Heart left ventricle (tissue), 16 donors: ENCODE measurements at regions of chr12 and their contacts with region 1.

Region 1: DNA sequence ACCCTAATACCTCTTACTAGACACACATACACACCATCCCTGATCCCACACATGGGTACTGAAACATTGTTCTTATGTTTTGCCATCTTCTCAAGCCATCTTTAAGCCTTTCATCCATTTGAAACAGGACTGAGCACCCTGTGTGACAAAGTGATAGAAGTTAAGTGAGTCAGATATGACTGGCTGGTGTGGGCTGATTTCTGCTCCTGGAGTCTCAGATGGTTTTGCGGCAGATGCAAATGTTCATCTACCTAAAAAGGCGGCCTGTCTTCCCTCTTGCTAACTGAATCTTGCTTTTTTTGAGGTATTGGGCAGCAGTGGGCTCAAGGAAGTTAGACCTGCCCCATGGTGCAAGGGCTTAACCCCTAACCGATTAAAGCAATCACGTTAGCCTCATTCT is 30.4 kb upstream of the PKP2 start:
- DNase-seq: no peak
- ATAC-seq: no peak
- H3K4me3 ChIP-seq: no peak overlapping the region
- H3K27ac ChIP-seq: no peak overlapping the region
- H3K4me1 ChIP-seq: no peaks in the 10 kb centered on the region
- H3K27me3 ChIP-seq: no peaks in the 10 kb centered on the region
- CTCF ChIP-seq: no peak
- POLR2A ChIP-seq: no peak

Region 2: DNA sequence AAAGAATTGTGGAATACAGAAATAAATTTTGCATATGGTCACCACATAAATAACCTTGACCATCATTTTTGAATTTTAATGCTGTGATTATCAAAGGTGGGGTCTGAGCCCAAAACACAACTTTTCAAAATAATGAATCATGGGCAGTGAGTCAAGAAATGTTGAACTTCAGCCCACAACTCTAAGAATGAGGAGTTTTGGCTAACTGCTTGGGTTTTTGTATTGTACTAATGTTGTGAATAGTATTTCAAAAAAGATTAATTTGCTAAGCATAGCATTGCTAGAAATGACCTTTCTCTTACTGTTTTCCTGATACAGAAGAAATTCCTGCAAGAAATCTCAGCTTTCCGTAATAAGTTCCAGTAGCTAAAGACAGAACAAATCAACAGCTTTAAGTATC is 146.9 kb before region 1 on chr12:
- intact Hi-C with region 1: loop called in 1 of 10 experiments (anchors 5 kb)
- DNase-seq: no peak
- ATAC-seq: no peak
- H3K4me3 ChIP-seq: no peak overlapping the region
- H3K27ac ChIP-seq: no peak overlapping the region
- H3K4me1 ChIP-seq: no peaks in the 10 kb centered on the region
- H3K27me3 ChIP-seq: no peaks in the 10 kb centered on the region
- CTCF ChIP-seq: no peak
- POLR2A ChIP-seq: no peak

Region 3: GRCh38 chr12:32885831-32886230 is 41.1 kb before region 1 on chr12:
- intact Hi-C with region 1: no loop called
- DNase-seq: no peak
- ATAC-seq: no peak
- H3K4me3 ChIP-seq: peak overlapping the region in 1 of 12 donors; percentile 7
- H3K27ac ChIP-seq: peak overlapping the region in 9 of 12 donors; percentile 7 to 90 (median 53)
- H3K4me1 ChIP-seq: peaks cover 0 to 66% (median 8%) of the 10 kb centered on the region in 12 donors
- H3K27me3 ChIP-seq: no peaks in the 10 kb centered on the region
- CTCF ChIP-seq: no peak
- POLR2A ChIP-seq: no peak

Region 4: DNA sequence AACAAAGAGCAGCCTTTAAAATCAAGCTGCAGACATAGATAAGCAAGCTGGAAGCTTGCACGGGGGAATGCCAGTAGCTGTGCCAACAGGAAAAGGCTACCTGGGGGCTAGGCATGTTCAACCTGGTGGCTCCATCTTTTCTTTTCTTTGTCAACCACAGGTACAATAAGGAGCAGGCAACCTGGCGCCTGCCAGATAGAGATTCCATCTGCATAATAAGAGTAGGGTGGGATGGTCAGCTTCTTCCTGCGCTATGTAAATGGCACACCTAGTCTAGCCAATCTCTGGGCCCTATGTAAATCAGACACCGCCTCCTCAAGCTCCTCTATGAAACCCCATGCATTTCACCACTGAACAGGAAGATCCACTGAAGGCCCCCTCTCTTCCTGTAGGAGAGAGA is 57.0 kb after region 1 on chr12:
- intact Hi-C with region 1: no loop called
- DNase-seq: no peak
- ATAC-seq: no peak
- H3K4me3 ChIP-seq: no peak overlapping the region
- H3K27ac ChIP-seq: no peak overlapping the region
- H3K4me1 ChIP-seq: no peaks in the 10 kb centered on the region
- H3K27me3 ChIP-seq: peaks cover 0 to 16% (median 0%) of the 10 kb centered on the region in 9 donors
- CTCF ChIP-seq: no peak
- POLR2A ChIP-seq: no peak

Region 5: GRCh38 chr12:32997471-32997870 is 70.5 kb after region 1 on chr12:
- intact Hi-C with region 1: no loop called
- DNase-seq: no peak
- ATAC-seq: no peak
- H3K4me3 ChIP-seq: no peak overlapping the region
- H3K27ac ChIP-seq: no peak overlapping the region
- H3K4me1 ChIP-seq: no peaks in the 10 kb centered on the region
- H3K27me3 ChIP-seq: no peaks in the 10 kb centered on the region
- CTCF ChIP-seq: no peak
- POLR2A ChIP-seq: no peak